BJ (cell line): ENCODE measurements at regions of chr5 and their contacts with region 1.

Region 1: GRCh38 chr5:76601470-76601869 is 21.7 kb downstream of the F2RL2 start:
- DNase-seq: no peak
- H3K4me3 ChIP-seq: no peak overlapping the region
- H3K27me3 ChIP-seq: no peaks in the 10 kb centered on the region
- CTCF ChIP-seq: peak; percentile 70

Region 2: GRCh38 chr5:76582230-76583162 is 19.0 kb before region 1 on chr5:
- CTCF ChIA-PET with region 1: interaction called, 10 read pairs
- POLR2A ChIA-PET with region 1: no interaction called
- DNase-seq: no peak
- H3K4me3 ChIP-seq: no peak overlapping the region
- H3K27me3 ChIP-seq: peaks cover 7% of the 10 kb centered on the region
- CTCF ChIP-seq: no peak

Region 3: DNA sequence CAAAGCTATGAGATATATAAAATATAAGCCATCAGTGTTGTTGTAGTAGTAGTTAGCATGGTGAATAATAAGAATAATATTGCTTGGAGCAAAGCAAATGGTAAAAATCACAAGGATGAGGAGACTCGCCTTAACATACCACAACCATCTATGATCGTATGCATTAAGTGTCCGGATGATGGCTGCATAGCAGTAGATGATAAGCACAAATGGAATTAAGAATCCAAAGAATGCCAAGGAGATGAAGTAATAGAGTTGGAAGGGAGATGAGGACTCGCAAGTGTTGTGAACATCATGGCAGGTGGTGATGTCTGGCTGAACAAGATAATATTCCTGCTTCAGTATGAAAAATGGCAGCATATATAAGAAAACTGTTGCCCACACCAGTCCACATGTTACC is 16.2 kb after region 1 on chr5:
- CTCF ChIA-PET with region 1: interaction called, 12 read pairs
- POLR2A ChIA-PET with region 1: interaction called, 3 read pairs
- DNase-seq: peak; percentile 43
- H3K4me3 ChIP-seq: no peak overlapping the region
- H3K27me3 ChIP-seq: no peaks in the 10 kb centered on the region
- CTCF ChIP-seq: no peak

Region 4: GRCh38 chr5:76634661-76635060 is 33.2 kb after region 1 on chr5:
- CTCF ChIA-PET with region 1: interaction called, 93 read pairs
- POLR2A ChIA-PET with region 1: no interaction called
- DNase-seq: no peak
- H3K4me3 ChIP-seq: no peak overlapping the region
- H3K27me3 ChIP-seq: no peaks in the 10 kb centered on the region
- CTCF ChIP-seq: no peak

Region 5: DNA sequence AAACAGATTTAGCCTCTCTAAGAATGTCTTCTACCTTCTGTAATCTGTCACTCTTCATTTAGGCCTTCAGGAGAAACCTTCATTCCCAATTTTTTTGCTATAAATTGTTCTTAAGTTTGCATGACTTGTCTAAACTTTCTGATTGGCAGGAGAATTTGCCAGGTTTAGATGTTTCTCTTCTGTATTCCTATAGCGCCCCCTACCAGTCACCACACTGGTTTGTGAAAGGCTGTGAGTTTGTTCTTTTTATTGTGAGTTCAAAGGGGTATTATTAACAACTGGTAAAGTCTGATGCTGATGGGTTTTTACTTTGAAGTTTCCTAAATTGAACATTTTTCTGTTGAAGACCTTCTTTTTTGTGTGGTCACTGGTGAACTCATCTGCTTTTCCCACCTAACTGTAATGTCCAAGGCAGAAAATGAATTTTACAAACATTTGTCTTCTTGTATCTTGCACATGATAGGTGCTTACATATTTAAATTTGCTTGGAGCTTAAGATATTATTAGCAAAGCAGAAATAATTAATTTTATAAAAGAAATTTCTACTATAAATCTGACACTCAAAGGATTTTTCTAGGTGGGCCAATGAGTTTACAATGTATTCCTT is 40.1 kb after region 1 on chr5:
- CTCF ChIA-PET with region 1: interaction called, 93 read pairs
- POLR2A ChIA-PET with region 1: no interaction called
- DNase-seq: no peak
- H3K4me3 ChIP-seq: no peak overlapping the region
- H3K27me3 ChIP-seq: no peaks in the 10 kb centered on the region
- CTCF ChIP-seq: peak; percentile 84

Region 6: DNA sequence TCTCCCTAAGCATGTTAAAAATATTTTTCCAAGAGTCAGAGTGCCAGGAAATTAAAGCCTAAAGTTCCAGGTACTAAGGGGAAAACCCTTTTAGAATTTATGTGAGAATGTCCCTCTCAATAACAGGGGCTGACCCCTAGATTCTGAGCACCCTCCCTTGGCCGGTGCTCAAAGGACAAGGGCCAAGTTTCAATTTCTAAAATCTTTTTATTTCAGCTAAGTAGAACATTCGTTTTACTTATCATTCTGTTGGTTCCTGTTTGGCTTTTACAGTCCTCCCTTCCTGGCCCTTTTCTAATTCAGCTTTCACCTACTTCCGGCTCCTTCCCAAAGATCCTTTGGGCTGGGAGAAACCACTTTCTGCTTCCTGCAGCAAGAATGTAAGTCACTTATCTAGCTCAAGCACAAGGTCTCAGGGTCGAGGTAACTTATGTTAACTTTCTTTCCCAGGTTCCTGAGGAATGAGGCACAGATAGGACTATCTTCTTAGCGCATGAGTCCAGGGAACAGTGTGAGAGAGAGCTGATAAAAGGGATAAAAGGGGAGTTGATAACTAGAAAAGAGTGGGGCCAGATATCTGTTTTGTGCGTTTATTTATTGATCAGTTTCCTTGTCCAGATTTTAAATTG is 56.3 kb after region 1 on chr5:
- CTCF ChIA-PET with region 1: interaction called, 13 read pairs
- POLR2A ChIA-PET with region 1: no interaction called
- DNase-seq: no peak
- H3K4me3 ChIP-seq: no peak overlapping the region
- H3K27me3 ChIP-seq: peaks cover 1% of the 10 kb centered on the region; the same call in 1 of the 2 replicates
- CTCF ChIP-seq: no peak

Region 7: GRCh38 chr5:76766746-76767145 is 165.3 kb after region 1 on chr5:
- CTCF ChIA-PET with region 1: interaction called, 12 read pairs
- POLR2A ChIA-PET with region 1: no interaction called
- DNase-seq: no peak
- H3K4me3 ChIP-seq: no peak overlapping the region
- H3K27me3 ChIP-seq: no peaks in the 10 kb centered on the region
- CTCF ChIP-seq: no peak